Endothelial cell of umbilical vein (primary cell): ENCODE measurements at regions of chr3 and their contacts with region 1.

Region 1: GRCh38 chr3:44252332-44252959 is 10.8 kb downstream of the TOPAZ1 start:
- DNase-seq: peak; percentile 93
- H3K4me3 ChIP-seq: no peak overlapping the region
- H3K27ac ChIP-seq: no peak overlapping the region
- H3K4me1 ChIP-seq: peaks cover 10% of the 10 kb centered on the region
- H3K27me3 ChIP-seq: no peaks in the 10 kb centered on the region
- CTCF ChIP-seq: peak in 1 of 2 donors; percentile 18
- POLR2A ChIP-seq: no peak

Region 2: DNA sequence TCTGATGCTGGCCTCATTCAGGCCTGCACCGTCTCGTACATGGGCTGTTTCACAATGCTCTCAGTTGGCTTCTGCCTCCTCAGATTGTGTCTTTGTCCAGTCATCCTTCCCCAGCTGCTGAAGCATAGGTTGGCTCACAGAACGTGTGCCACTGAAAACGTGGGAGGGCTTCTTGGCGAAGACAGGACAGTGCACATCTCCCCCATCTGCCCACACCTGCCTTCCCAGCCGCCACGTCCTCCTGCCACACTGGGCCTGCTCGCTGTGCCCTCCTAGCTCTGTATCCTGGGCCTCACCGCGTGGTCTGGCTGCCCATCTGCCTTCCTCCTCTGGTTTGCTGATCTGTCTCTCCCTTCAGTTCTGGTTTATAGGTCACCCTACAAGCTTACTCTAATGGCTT is 240.8 kb before region 1 on chr3:
- CTCF ChIA-PET with region 1: no interaction called
- POLR2A ChIA-PET with region 1: no interaction called
- dilution Hi-C with region 1: no loop called
- intact Hi-C with region 1: no loop called
- DNase-seq: no peak
- H3K4me3 ChIP-seq: no peak overlapping the region
- H3K27ac ChIP-seq: no peak overlapping the region
- H3K4me1 ChIP-seq: no peaks in the 10 kb centered on the region
- H3K27me3 ChIP-seq: no peaks in the 10 kb centered on the region
- CTCF ChIP-seq: no peak
- POLR2A ChIP-seq: no peak

Region 3: DNA sequence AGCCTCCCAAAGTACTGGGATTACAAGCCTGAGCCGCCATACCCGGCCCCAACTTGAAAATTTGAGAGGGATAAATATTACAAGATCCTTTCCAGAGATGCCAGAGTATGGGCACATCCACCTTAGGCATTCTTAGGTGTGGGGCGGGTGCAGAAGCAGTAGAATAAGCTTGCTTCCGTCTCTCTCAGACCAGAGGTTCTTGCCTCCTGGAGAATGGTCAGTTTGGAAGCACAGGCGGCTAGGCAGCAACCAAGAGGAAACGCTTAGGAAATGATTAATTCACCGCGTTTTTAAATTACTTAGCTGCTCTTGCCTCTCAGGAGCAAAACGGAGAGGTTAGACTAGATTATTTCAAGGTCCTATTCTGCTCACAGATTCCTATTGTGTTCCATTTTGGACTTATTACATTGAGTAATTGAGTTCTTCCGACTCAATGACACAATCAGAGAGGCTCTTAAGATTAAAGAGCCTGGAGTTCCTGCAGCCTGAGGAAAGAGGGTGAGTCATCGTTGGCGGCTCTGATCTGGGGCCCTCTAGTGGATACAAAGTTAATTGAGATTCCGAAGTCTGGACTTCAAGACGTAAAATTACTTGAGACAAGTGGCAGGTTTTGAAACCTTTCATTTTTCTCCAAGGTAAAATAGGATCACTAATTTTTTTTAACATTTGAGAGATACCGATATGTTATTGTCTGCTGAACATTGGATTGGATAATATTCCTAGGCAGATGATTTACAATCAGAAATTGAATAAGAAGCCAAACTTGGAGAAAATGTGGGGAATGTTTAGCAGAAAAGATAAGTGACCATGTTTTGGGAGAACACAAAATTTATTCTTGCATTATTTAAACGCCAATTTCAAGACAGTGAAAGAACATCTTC is 16.6 kb before region 1 on chr3:
- CTCF ChIA-PET with region 1: interaction called, 31 read pairs
- POLR2A ChIA-PET with region 1: no interaction called
- dilution Hi-C with region 1: no loop called
- intact Hi-C with region 1: no loop called
- DNase-seq: peak; percentile 96
- H3K4me3 ChIP-seq: no peak overlapping the region
- H3K27ac ChIP-seq: peak overlapping the region; percentile 57
- H3K4me1 ChIP-seq: peaks cover 12% of the 10 kb centered on the region
- H3K27me3 ChIP-seq: no peaks in the 10 kb centered on the region
- CTCF ChIP-seq: peak; percentile 59 to 86
- POLR2A ChIP-seq: no peak

Region 4: GRCh38 chr3:44264146-44264545 is 11.7 kb after region 1 on chr3:
- CTCF ChIA-PET with region 1: interaction called, 10 read pairs
- POLR2A ChIA-PET with region 1: no interaction called
- dilution Hi-C with region 1: no loop called
- intact Hi-C with region 1: no loop called
- DNase-seq: no peak
- H3K4me3 ChIP-seq: no peak overlapping the region
- H3K27ac ChIP-seq: no peak overlapping the region
- H3K4me1 ChIP-seq: no peaks in the 10 kb centered on the region
- H3K27me3 ChIP-seq: peaks cover 3% of the 10 kb centered on the region in 2 experiments
- CTCF ChIP-seq: no peak
- POLR2A ChIP-seq: no peak